Activated CD4-positive, alpha-beta T cell treated with anti-CD3 and anti-CD28 coated beads, Interleukin-2, amount 10 ng/mL, durations not matched to agents 7 days and 5 days (primary cell): ENCODE measurements at regions of chr3 and their contacts with region 1.

Region 1: DNA sequence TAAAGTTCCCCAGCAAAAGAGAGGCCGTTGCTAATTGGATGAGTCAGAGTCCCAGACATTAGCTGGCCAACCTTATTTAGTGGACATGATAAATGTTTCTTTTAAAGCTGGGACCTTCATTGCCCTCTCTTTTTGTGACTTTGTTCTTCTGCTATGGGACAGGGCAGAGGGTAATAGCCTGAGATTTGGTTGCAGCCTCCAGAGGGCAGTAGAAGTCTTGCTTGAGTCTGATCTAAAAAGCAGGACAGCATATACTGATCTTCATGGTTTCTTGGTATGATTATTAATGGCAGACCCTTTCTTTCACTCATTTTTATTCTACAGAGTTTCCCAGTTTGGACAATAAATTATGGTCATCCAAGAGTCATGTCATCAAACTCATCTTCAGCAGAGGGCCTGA is 25.1 kb upstream of the ZKSCAN7 start:
- DNase-seq: peak; percentile 29
- H3K4me3 Mint-ChIP-seq: no peak overlapping the region
- H3K27ac Mint-ChIP-seq: no peak overlapping the region
- H3K4me1 Mint-ChIP-seq: peaks cover 2% of the 10 kb centered on the region
- H3K27me3 Mint-ChIP-seq: peaks cover 22% of the 10 kb centered on the region

Region 2: GRCh38 chr3:44509393-44509921 is 20.5 kb before region 1 on chr3:
- CTCF ChIA-PET with region 1: no interaction called
- POLR2A ChIA-PET with region 1: no interaction called
- DNase-seq: peak; percentile 6
- H3K4me3 Mint-ChIP-seq: peak overlapping the region; percentile 97
- H3K27ac Mint-ChIP-seq: peak overlapping the region; percentile 97
- H3K4me1 Mint-ChIP-seq: peaks cover 33% of the 10 kb centered on the region
- H3K27me3 Mint-ChIP-seq: no peaks in the 10 kb centered on the region

Region 3: GRCh38 chr3:44584646-44585501 is 54.9 kb after region 1 on chr3 and contains the start of gene ZNF660:
- CTCF ChIA-PET with region 1: no interaction called
- POLR2A ChIA-PET with region 1: no interaction called
- DNase-seq: no peak
- H3K4me3 Mint-ChIP-seq: no peak within 1 kb of the TSS
- H3K27ac Mint-ChIP-seq: no peak within 1 kb of the TSS
- H3K4me1 Mint-ChIP-seq: no peaks in the 10 kb centered on the region
- H3K27me3 Mint-ChIP-seq: peaks cover 17% of the 10 kb centered on the region
- total RNA-seq, gene ZNF660: 0.15 TPM in 1 of 2 experiments, not detected in the other

Region 4: GRCh38 chr3:44913868-44914468 is 384.0 kb after region 1 on chr3:
- CTCF ChIA-PET with region 1: interaction called, 13 read pairs
- POLR2A ChIA-PET with region 1: no interaction called
- DNase-seq: peak; percentile 66
- H3K4me3 Mint-ChIP-seq: no peak overlapping the region
- H3K27ac Mint-ChIP-seq: no peak overlapping the region
- H3K4me1 Mint-ChIP-seq: no peaks in the 10 kb centered on the region
- H3K27me3 Mint-ChIP-seq: peaks cover 4% of the 10 kb centered on the region